ENCODE measurements at regions of chr15 and their contacts with region 1.

Region 1: DNA sequence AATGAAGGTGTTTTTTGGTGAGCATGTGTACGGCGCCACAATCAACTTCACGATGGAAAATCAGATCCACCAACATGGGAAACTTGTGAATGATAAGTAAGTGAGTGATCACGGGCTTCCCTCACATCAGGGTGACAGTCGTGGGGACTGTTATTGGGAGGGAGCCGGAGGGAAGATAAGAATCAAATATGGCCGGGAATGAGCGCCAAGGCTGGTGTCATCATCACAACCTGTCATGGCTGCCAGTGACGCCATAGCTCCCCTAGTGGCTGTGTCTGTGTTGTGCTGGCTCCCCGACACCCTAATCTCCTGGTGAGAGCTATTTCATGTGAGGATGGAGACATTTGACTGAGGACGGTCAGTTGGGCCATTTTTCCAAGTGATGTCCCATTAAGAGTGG is 168.5 kb downstream of the SV2B start:
- DNase-seq: no peak

Region 2: DNA sequence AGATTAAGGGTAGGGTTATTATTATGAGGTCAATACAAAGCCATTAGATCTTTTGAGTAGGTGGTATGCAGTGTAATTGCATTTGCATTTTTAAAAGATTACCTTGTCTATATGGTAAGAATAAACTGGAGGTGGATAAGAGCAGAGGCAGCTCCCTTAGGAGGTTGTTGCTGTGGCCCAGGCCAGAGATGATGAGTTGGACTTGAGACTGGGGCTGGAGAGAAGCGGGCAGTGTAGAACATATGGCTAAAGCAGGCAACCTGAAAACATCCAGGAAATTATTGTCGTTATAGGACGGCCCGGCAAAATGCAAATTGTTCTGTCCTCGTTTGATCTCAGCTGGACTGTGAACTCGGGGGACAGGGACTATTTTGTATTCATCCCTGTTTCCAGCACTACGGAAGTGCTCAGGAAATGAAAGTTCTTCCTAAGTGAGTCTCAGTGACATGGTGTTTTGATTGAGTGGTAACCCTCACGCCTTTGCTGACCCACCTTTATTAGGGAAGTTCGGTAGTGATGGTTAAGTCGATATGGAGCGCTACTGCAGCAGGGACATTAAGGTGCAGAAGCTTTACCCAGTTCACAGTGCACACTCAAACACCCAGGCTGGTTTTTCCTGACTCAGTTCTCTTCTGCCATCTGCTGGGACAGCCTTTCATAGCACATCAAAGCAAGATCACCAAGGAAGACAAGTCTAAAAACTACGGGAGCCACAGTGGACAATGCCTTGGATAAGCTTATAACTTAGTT is 219.0 kb before region 1 on chr15:
- in situ Hi-C with region 1: loop called (anchors 10 kb)
- DNase-seq: peak; percentile 50

Region 3: GRCh38 chr15:91385311-91385710 is 116.8 kb after region 1 on chr15:
- in situ Hi-C with region 1: no loop called
- DNase-seq: peak; percentile 2